Activated T-helper 2 cell treated with anti-CD3 and anti-CD28 coated beads, Interferon-gamma antibody, Interleukin-2, Interleukin-4, amounts not matched to agents 10 μg/mL and 5 μg/mL and 100 μg/mL, durations not matched to agents 14 hours and 24 hours and 36 hours (primary cell): ENCODE measurements at regions of chr4 and their contacts with region 1.

Region 1: GRCh38 chr4:139656614-139657486 is 8.8 kb upstream of the MGST2 start:
- DNase-seq: peak; percentile 36
- H3K4me3 Mint-ChIP-seq: peak overlapping the region; percentile 77
- H3K27ac Mint-ChIP-seq: peak overlapping the region; percentile 93
- H3K4me1 Mint-ChIP-seq: peaks cover 27% of the 10 kb centered on the region
- H3K27me3 Mint-ChIP-seq: no peaks in the 10 kb centered on the region

Region 2: DNA sequence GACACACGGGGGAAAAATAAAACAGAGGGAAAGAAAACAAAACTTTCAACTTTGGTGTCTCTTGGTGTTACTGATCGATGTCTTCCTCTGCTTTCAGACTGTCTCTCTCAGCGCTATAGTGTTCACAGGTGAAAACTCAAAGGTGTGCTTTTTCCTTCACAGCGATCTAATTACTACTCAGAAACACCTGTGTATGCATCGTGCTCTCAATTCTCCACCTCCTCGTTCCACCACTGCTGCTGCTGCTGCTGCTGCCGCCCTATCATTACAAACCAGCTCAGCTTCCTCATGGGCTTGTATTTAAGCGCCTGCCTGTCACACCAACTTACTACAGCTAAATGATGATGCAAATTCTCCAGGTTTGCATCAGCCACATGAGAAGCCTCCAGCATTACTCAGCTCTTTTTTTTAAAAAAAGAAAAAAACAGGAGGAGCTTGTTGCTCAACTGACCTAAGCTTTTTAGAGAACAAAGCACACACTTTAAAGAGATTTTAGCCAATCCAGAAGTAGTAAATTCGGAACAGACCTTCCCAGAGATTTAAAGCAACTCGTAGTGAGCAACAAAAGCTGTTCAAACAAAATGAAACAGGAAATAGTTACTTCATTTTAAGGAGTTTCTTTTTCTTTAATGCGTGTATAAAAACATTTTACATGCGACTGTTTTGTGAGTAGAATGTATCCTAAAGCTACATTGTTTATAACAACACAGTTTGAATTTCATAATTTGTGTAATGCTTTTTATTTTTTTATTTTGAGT is 1414.6 kb before region 1 on chr4 and contains the start of gene SLC7A11:
- intact Hi-C with region 1: loop called (anchors 5 kb)
- DNase-seq: peak; percentile 74
- H3K4me3 Mint-ChIP-seq: peak within 1 kb of the TSS; percentile 90
- H3K27ac Mint-ChIP-seq: peak within 1 kb of the TSS; percentile 97
- H3K4me1 Mint-ChIP-seq: peaks cover 30% of the 10 kb centered on the region
- H3K27me3 Mint-ChIP-seq: no peaks in the 10 kb centered on the region
- total RNA-seq, gene SLC7A11: 0.92 and 1.8 TPM in 2 replicates

Region 3: GRCh38 chr4:138981930-138982390 is 674.9 kb before region 1 on chr4:
- intact Hi-C with region 1: no loop called
- DNase-seq: no peak
- H3K4me3 Mint-ChIP-seq: no peak overlapping the region
- H3K27ac Mint-ChIP-seq: no peak overlapping the region
- H3K4me1 Mint-ChIP-seq: no peaks in the 10 kb centered on the region
- H3K27me3 Mint-ChIP-seq: no peaks in the 10 kb centered on the region

Region 4: DNA sequence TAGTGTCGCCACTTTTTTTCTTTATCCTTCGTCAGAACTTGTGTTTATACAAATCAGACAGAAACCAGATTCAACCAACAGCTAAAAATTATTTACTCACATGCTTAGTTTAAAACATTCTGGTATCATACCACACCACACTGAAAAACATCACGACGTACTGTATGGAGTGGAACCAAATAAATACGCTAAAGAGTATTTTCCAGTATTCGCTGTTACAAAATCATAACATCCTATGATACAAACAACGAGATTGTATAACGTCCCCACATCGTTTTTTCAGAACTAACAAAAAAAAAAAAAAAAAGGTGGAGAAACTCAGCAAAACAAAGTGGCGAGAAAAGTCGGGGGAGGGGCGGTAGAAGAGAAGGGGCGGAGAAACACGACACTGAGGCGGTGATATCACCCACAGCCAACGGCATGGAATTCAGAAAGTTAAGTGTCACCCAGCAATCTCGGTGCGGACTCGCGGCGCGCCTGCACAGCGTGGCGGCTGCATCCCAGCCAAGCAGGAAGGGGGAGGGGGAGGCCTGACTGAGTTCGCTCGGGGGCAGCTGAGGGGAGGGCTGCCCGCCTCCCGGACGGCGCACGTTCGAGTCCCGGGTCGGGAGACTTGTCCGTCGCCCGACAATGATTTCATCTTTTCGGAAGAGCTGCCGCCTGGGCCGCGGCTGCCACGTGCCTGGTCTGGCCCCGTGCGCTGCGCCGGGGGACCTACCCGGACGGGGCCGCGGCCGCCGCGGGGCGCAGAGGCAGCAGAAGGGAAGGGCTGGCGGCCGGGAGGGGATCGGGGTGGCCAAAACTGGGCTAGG is 101.8 kb before region 1 on chr4:
- intact Hi-C with region 1: loop called (anchors 5 kb)
- DNase-seq: peak; percentile 82
- H3K4me3 Mint-ChIP-seq: peak overlapping the region; percentile 97
- H3K27ac Mint-ChIP-seq: peak overlapping the region; percentile 98
- H3K4me1 Mint-ChIP-seq: peaks cover 47% of the 10 kb centered on the region
- H3K27me3 Mint-ChIP-seq: peaks cover 4% of the 10 kb centered on the region

Region 5: DNA sequence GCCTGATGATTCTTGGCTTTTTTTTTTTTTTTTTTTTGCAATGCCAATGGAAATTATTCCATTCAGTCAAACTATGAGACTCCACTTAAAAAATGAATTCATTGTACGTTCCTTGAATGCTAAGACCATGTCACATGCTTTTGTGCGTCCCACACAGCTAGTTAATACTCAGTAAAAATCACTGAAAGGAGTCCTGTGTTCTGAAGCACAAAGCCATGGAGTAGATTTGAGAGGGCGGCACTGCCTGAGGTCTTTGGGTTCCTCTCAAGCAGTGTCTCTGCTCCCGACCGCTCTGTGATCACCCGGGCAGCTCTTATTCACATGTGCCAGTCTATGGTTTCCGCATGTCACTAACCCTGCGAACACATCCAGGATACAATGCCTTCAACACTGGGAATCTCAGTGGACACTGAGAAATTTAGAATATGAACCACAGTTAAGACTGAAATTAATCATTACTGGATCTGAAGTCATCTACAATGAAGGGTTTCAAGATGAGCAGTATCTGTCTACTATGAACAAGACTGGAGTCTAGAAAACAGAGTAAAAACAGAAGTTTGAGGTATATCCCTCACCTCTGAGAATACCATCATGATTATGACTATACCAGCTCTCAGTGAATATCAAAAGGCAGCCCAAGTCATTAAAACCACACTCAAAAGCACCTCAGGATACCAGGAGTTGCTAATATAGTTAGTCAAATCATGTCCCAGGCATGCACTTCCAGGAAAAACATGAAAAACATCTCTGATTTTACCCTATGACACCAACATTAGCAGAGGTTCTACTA is 201.8 kb after region 1 on chr4:
- intact Hi-C with region 1: loop called (anchors 2 kb)
- DNase-seq: no peak
- H3K4me3 Mint-ChIP-seq: no peak overlapping the region
- H3K27ac Mint-ChIP-seq: peak overlapping the region; percentile 61
- H3K4me1 Mint-ChIP-seq: peaks cover 41% of the 10 kb centered on the region
- H3K27me3 Mint-ChIP-seq: peaks cover 26% of the 10 kb centered on the region

Region 6: DNA sequence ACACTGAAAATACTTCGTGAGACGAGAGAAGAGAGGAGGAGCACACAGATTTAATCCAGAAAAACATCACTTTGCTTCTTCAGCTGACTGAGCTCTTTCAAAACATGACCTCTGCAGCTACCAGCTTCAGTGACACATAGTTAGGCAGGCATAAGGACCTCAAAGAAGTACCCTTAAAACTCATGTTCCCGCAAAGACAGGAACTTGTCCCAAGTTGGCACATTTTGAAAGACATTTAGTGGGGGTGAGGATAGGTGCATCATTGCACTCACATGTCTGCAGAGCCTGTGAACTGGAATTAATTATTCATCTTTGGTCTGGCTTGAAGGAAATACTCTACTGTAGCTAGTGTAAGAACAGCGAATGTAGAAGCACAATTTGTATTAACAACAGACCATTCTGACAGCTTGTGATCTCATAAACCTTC is 230.5 kb after region 1 on chr4:
- intact Hi-C with region 1: no loop called
- DNase-seq: no peak
- H3K4me3 Mint-ChIP-seq: no peak overlapping the region
- H3K27ac Mint-ChIP-seq: no peak overlapping the region
- H3K4me1 Mint-ChIP-seq: no peaks in the 10 kb centered on the region
- H3K27me3 Mint-ChIP-seq: peaks cover 10% of the 10 kb centered on the region

Region 7: GRCh38 chr4:140049024-140049848 is 392.4 kb after region 1 on chr4:
- intact Hi-C with region 1: loop called (anchors 5 kb)
- DNase-seq: peak; percentile 52
- H3K4me3 Mint-ChIP-seq: peak overlapping the region; percentile 74
- H3K27ac Mint-ChIP-seq: peak overlapping the region; percentile 78
- H3K4me1 Mint-ChIP-seq: peaks cover 55% of the 10 kb centered on the region
- H3K27me3 Mint-ChIP-seq: peaks cover 36% of the 10 kb centered on the region

Region 8: DNA sequence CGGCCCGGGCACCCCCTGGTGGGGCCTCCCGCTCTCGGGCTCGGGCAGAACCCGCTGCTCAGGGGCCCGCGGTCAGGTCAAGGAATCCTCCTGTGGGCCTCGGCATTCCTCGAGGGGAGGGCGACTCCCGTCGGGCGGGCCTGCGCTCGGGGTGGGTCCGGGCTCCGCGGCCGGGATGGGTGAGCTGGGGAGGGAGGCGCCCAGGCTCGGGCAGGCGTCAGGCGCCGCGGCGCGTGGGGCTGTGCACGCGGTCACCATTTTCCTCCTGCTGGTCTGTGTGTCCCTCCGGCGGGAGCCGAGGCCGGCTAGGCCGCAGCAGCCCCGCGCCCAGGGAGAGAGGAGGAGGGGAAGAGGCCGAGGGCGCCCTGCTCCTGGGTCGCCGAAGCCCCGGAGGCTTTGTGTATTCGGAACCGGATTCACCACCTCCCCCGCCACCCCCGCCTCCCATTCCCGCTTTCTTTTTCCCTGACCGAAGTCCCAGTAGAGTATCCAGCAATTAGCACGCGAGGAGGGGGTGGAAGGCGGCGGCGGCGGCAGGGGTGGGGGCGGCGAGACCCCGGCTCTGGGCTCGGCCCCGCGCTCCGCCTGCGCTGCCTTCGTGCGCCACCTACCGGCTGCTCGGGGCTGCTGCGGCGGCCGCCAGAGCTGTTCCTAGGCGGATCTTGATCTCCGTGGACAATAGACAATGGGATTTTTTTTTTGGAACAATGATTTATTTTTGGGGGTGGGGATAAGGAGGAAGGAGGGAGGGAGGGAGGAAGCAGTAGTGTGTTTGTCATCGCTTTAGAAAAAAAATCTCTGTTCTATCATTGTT is 596.1 kb after region 1 on chr4:
- intact Hi-C with region 1: loop called (anchors 5 kb)
- DNase-seq: peak; percentile 39
- H3K4me3 Mint-ChIP-seq: peak overlapping the region; percentile 68
- H3K27ac Mint-ChIP-seq: peak overlapping the region; percentile 56
- H3K4me1 Mint-ChIP-seq: peaks cover 36% of the 10 kb centered on the region
- H3K27me3 Mint-ChIP-seq: peaks cover 17% of the 10 kb centered on the region

Region 9: GRCh38 chr4:140373328-140374129 is 716.7 kb after region 1 on chr4 and contains the start of gene SCOC:
- intact Hi-C with region 1: loop called (anchors 5 kb)
- DNase-seq: peak; percentile 97
- H3K4me3 Mint-ChIP-seq: no peak within 1 kb of the TSS
- H3K27ac Mint-ChIP-seq: no peak within 1 kb of the TSS
- H3K4me1 Mint-ChIP-seq: peaks cover 28% of the 10 kb centered on the region
- H3K27me3 Mint-ChIP-seq: peaks cover 10% of the 10 kb centered on the region
- total RNA-seq, gene SCOC: 36.7 and 38.0 TPM in 2 replicates